ENCODE measurements at regions of chr18 and their contacts with region 1.

Region 1: GRCh38 chr18:22169007-22169864 is at the start of gene GATA6:
- DNase-seq: peak; percentile 88 to 97
- H3K4me3 ChIP-seq: peak within 1 kb of the TSS; percentile 89 to 90
- H3K27ac ChIP-seq: peak within 1 kb of the TSS; percentile 98 to 99
- H3K4me1 ChIP-seq: peaks cover 0 to 5% of the 10 kb centered on the region in 2 donors
- H3K27me3 ChIP-seq: no peaks in the 10 kb centered on the region
- CTCF ChIP-seq: peak; percentile 31 to 59 (median 44)
- total RNA-seq, gene GATA6: 89.3 TPM

Region 2: GRCh38 chr18:21740724-21741510 is 428.3 kb before region 1 on chr18 and contains the start of gene MIB1:
- intact Hi-C with region 1: loop called (anchors 10 kb)
- DNase-seq: peak in 1 of 2 donors; percentile 93
- H3K4me3 ChIP-seq: peak within 1 kb of the TSS; percentile 76 to 88
- H3K27ac ChIP-seq: peak within 1 kb of the TSS; percentile 96 to 99
- H3K4me1 ChIP-seq: peaks cover 0 to 5% of the 10 kb centered on the region in 2 donors
- H3K27me3 ChIP-seq: no peaks in the 10 kb centered on the region
- CTCF ChIP-seq: no peak
- total RNA-seq, gene MIB1: 11.0 TPM

Region 3: GRCh38 chr18:22185273-22185672 is 16.0 kb after region 1 on chr18:
- intact Hi-C with region 1: loop called (anchors 1 kb)
- DNase-seq: no peak
- H3K4me3 ChIP-seq: peak overlapping the region in 1 of 2 donors; percentile 39
- H3K27ac ChIP-seq: peak overlapping the region; percentile 89 to 97
- H3K4me1 ChIP-seq: peaks cover 22 to 80% of the 10 kb centered on the region in 2 donors
- H3K27me3 ChIP-seq: no peaks in the 10 kb centered on the region
- CTCF ChIP-seq: peak; percentile 36 to 46 (median 36)

Region 4: GRCh38 chr18:22471546-22472131 is 302.4 kb after region 1 on chr18:
- intact Hi-C with region 1: loop called (anchors 2 kb)
- DNase-seq: peak; percentile 47 to 81
- H3K4me3 ChIP-seq: peak overlapping the region in 1 of 2 donors; percentile 38
- H3K27ac ChIP-seq: peak overlapping the region; percentile 76 to 80
- H3K4me1 ChIP-seq: peaks cover 19 to 25% of the 10 kb centered on the region in 2 donors
- H3K27me3 ChIP-seq: no peaks in the 10 kb centered on the region
- CTCF ChIP-seq: no peak

Region 5: DNA sequence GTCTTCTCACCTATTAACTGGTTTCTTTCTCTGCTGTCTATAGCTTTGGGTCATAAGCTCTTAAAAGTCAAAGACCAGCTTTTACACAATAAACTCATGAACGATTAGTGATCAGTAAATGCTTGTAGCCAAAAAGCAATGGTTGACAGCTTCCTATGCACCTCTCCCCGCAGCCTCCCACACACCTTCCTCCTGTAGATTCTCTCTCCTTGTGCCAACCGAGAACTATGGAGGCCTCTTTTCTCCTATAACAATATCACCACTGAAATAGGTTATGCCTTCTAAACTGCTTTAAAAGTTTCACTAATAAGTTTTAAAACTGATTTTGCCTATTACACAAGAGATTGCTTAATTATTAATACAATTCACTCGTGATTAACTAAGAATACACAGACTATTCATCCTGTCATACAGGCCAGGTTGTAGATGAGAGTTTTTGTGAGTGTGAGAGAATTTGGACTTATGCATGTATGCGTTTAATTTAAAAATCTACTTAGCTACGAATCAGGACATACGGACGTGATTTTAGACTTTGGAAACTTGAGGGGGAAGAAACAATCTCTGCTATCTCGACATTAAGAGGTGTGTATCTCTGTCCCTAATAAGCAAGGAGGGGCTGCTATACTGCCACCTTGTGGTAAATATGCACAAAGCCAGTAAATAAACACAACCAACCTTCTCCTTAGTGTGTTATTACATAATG is 534.8 kb after region 1 on chr18:
- intact Hi-C with region 1: loop called (anchors 10 kb)
- DNase-seq: no peak
- H3K4me3 ChIP-seq: no peak overlapping the region
- H3K27ac ChIP-seq: no peak overlapping the region
- H3K4me1 ChIP-seq: no peaks in the 10 kb centered on the region
- H3K27me3 ChIP-seq: no peaks in the 10 kb centered on the region
- CTCF ChIP-seq: peak; percentile 25 to 60 (median 48)